ENCODE measurements at regions of chr17 and their contacts with region 1.

Region 1: GRCh38 chr17:45394913-45395568 is 37.6 kb downstream of the ARHGAP27 start:
- DNase-seq: peak; percentile 64
- H3K4me3 Mint-ChIP-seq: no peak overlapping the region
- H3K27ac Mint-ChIP-seq: peak overlapping the region; percentile 4
- H3K4me1 Mint-ChIP-seq: no peaks in the 10 kb centered on the region
- H3K27me3 Mint-ChIP-seq: no peaks in the 10 kb centered on the region

Region 2: GRCh38 chr17:45410144-45411091 is 15.4 kb after region 1 on chr17:
- CTCF ChIA-PET with region 1: interaction called, 10 read pairs
- intact Hi-C with region 1: no loop called
- DNase-seq: peak; percentile 80
- H3K4me3 Mint-ChIP-seq: peak overlapping the region; percentile 99
- H3K27ac Mint-ChIP-seq: peak overlapping the region; percentile 100
- H3K4me1 Mint-ChIP-seq: peaks cover 49% of the 10 kb centered on the region
- H3K27me3 Mint-ChIP-seq: no peaks in the 10 kb centered on the region

Region 3: GRCh38 chr17:45425125-45425983 is 30.3 kb after region 1 on chr17:
- CTCF ChIA-PET with region 1: interaction called, 4 read pairs
- intact Hi-C with region 1: loop called (anchors 2 kb)
- DNase-seq: no peak
- H3K4me3 Mint-ChIP-seq: no peak overlapping the region
- H3K27ac Mint-ChIP-seq: no peak overlapping the region
- H3K4me1 Mint-ChIP-seq: peaks cover 13% of the 10 kb centered on the region
- H3K27me3 Mint-ChIP-seq: peaks cover 5% of the 10 kb centered on the region

Measured in activated naive CD4-positive, alpha-beta T cell treated with anti-CD3 and anti-CD28 coated beads for 36 hours (primary cell).